Heart right ventricle (tissue), 16 donors: ENCODE measurements at regions of chr13 and their contacts with region 1.

Region 1: GRCh38 chr13:50512474-50513299 is 330.8 kb downstream of the DLEU7 start:
- DNase-seq: peak; percentile 65 to 67
- ATAC-seq: peak; percentile 84 to 95 (median 92)
- H3K4me3 ChIP-seq: peak overlapping the region in 9 of 10 donors; percentile 2 to 42 (median 40)
- H3K27ac ChIP-seq: peak overlapping the region; percentile 59 to 90 (median 82)
- H3K4me1 ChIP-seq: peaks cover 0 to 38% (median 22%) of the 10 kb centered on the region in 9 donors
- H3K27me3 ChIP-seq: no peaks in the 10 kb centered on the region
- CTCF ChIP-seq: peak in 5 of 9 donors; percentile 11 to 46 (median 38)

Region 2: DNA sequence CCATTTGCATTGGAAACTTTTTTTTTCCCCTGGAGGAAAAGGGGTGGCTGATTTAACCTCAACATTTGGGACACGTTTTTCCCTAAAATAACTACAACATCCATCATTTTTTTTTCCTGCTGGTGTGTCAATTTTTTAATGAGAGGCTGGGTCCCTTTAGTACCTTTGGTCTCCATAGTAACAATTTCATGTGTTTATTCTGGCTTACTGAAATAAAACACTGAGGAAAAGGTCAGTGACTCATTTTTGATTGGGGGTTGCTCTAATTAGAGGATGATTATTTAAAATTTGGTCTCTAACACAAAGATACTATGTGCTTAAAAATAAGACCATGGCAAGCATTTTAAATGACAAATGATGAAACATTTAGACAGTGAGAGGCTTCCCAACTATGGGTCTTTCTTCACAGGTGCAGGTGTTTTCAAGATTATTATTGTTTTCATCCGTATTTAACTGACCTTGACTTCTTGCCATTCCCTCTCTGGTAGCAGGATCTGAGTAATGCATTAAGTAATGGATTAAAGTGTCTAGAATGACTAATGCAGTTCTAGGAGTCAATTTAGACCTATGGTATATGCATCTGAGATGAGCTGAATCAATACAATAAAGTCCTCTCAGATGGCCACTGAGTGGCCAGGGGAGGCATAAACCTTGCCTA is 91.1 kb before region 1 on chr13:
- intact Hi-C with region 1: loop called in 1 of 10 experiments (anchors 10 kb)
- DNase-seq: no peak
- ATAC-seq: peak in 3 of 8 donors; percentile 26 to 36 (median 28)
- H3K4me3 ChIP-seq: no peak overlapping the region
- H3K27ac ChIP-seq: peak overlapping the region in 9 of 10 donors; percentile 47 to 78 (median 69)
- H3K4me1 ChIP-seq: peaks cover 3 to 68% (median 58%) of the 10 kb centered on the region in 9 donors
- H3K27me3 ChIP-seq: no peaks in the 10 kb centered on the region
- CTCF ChIP-seq: no peak

Region 3: DNA sequence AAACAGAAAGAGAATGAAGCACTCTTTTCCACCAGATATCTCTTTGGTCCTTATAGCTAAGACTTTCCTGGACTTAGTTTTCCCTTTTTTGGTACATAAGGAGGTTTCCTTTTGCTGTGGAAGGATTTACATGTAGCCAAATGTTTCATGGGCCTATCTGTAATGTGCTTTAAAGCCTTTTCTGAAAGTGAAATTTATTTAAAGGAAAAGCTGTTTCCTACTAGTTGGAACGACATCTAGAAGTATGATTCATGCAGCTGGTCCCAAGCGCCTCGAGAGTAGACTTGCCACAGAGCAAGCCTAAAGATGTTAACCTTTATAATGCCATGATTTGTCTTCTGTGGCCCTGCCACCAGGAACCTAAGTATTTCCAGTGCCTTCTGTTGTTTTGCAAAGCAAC is 59.5 kb before region 1 on chr13:
- intact Hi-C with region 1: loop called in 1 of 10 experiments (anchors 2 kb)
- DNase-seq: no peak
- ATAC-seq: peak in 3 of 8 donors; percentile 42 to 47 (median 45)
- H3K4me3 ChIP-seq: no peak overlapping the region
- H3K27ac ChIP-seq: peak overlapping the region in 7 of 10 donors; percentile 1 to 58 (median 39)
- H3K4me1 ChIP-seq: peaks cover 9 to 50% (median 25%) of the 10 kb centered on the region in 9 donors
- H3K27me3 ChIP-seq: no peaks in the 10 kb centered on the region
- CTCF ChIP-seq: no peak

Region 4: DNA sequence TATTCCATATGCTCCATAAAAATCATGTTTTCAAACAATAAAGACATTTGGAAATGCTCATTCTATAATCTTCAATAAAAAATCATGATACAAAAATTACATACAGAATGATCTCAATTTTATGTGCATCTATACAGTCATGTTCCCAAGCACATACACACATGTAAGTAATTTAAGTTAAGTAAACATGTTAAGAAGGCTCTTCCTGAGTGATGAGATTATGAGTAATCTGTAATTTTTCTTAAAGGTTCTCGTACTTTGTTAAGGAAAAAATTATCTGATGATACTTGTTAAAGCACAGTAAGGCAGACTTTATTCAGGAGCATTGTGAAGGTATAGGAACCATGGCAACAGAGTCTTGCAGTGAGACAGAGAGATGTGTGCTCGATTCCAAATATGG is 360.8 kb after region 1 on chr13:
- intact Hi-C with region 1: no loop called
- DNase-seq: no peak
- ATAC-seq: no peak
- H3K4me3 ChIP-seq: no peak overlapping the region
- H3K27ac ChIP-seq: no peak overlapping the region
- H3K4me1 ChIP-seq: no peaks in the 10 kb centered on the region
- H3K27me3 ChIP-seq: peaks cover 0 to under 1% (median 0%) of the 10 kb centered on the region in 7 donors
- CTCF ChIP-seq: no peak